Spleen (tissue), 13 donors: ENCODE measurements at regions of chr12 and their contacts with region 1.

Region 1: DNA sequence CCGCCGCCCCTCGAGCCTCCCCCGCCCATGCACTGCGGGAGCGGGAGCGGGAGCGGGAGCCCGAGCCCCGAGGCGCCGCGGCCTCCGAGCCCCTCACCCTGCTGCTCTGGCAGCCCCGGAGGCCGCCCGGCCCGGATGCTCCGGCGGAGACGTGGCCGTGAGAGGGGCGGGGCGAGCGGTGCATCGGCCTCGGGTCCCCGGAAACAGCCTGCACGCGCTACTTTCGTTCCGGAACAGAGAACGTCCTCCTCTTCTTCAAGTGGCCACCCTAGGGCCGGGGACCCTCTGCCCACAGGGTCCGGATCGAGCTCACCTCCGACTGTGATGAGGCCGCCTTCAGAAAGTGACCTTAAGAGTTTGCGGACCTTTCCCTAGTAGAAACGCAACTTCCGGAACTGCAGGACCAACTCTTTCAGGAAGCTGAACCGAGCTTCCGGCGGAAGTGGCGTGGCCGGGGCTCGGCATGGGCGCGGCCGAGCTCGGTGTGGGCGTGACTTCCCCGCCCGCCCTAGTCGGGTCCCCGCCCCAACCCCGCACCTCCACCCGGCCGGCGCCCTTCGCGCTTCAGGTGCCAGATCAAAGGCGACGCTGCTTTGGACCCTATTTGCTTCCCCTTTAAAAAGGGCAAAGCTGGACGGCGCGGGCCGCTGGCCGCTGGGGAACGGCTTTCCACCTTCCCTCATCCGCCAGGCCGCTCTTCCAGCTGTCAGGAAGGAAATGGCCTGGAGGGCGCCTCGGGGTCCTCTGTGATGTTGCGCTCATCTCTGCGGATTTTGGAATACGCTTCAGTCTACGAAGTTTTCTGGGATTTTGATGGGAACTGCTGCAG is at the start of gene GOLGA3:
- DNase-seq: peak; percentile 98
- H3K4me3 ChIP-seq: peak within 1 kb of the TSS; percentile 89 to 99 (median 97)
- H3K27ac ChIP-seq: peak within 1 kb of the TSS; percentile 93 to 100 (median 98)
- H3K4me1 ChIP-seq: peaks cover 17 to 55% (median 31%) of the 10 kb centered on the region in 6 donors
- H3K27me3 ChIP-seq: no peaks in the 10 kb centered on the region
- CTCF ChIP-seq: no peak
- POLR2A ChIP-seq: peak in 2 of 3 donors; percentile 36 to 90
- total RNA-seq, gene GOLGA3: 51.3 to 80.9 (median 56.1) TPM

Region 2: GRCh38 chr12:132887513-132888351 is 58.8 kb after region 1 on chr12 and contains the start of gene CHFR:
- intact Hi-C with region 1: loop called (anchors 10 kb)
- DNase-seq: peak; percentile 100
- H3K4me3 ChIP-seq: peak within 1 kb of the TSS; percentile 82 to 95 (median 89)
- H3K27ac ChIP-seq: peak within 1 kb of the TSS; percentile 97 to 99 (median 98)
- H3K4me1 ChIP-seq: peaks cover 10 to 39% (median 24%) of the 10 kb centered on the region in 6 donors
- H3K27me3 ChIP-seq: no peaks in the 10 kb centered on the region
- CTCF ChIP-seq: peak in 2 of 11 experiments; percentile 10 to 41
- POLR2A ChIP-seq: no peak
- total RNA-seq, gene CHFR: 60.4 to 87.2 (median 68.1) TPM